Head of caudate nucleus (tissue), 42 donors: ENCODE measurements at regions of chr12 and their contacts with region 1.

Region 1: GRCh38 chr12:63079791-63080502 is 71.1 kb downstream of the AVPR1A start:
- DNase-seq: no peak

Region 2: DNA sequence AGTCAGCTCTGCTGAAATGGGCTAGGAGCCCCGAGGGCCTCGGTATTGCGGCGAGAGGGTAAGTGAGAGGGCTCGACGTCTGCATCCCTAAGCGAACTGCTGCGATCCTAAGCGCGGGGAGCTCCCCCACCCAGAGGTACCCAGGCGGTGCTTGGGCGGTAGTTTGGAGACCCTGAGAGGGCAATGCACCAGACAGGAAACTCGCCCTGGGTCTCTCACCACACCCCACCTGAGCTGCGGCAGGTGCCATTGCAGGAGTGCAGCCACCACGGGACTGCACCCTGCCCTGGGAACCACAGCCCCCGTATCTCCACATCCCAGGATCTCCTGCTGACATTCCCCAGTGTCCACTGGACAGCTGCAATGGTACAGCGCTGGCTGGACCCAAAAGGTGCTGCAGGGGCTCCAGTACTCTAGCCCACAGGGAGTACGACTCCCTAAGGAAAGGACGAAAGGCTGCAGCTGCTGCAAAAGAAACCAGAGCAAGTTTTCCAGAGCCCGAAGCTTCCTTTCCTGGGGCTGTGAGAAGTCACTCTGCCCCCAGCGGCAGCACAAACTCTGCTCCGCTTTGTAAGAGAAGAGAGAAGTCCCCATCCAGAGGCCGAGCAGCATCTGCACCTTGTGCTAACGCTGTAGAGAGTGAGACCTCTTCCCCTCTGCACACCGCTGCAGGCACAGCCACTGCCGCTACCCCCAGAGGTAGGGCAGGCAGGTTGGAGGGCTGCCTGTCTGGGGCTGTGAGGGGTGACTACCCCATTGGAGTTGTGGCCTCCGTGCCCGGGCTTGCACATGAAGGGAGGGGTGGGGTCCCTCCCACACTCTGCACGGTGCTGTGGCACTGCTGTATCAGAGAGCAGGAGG is 644.4 kb before region 1 on chr12:
- intact Hi-C with region 1: loop called (anchors 10 kb)
- DNase-seq: peak; percentile 44 to 89 (median 68)

Region 3: GRCh38 chr12:63206901-63207300 is 127.0 kb after region 1 on chr12:
- intact Hi-C with region 1: no loop called
- DNase-seq: no peak